Mucosa of descending colon (tissue), 3 donors: ENCODE measurements at regions of chr22 and their contacts with region 1.

Region 1: DNA sequence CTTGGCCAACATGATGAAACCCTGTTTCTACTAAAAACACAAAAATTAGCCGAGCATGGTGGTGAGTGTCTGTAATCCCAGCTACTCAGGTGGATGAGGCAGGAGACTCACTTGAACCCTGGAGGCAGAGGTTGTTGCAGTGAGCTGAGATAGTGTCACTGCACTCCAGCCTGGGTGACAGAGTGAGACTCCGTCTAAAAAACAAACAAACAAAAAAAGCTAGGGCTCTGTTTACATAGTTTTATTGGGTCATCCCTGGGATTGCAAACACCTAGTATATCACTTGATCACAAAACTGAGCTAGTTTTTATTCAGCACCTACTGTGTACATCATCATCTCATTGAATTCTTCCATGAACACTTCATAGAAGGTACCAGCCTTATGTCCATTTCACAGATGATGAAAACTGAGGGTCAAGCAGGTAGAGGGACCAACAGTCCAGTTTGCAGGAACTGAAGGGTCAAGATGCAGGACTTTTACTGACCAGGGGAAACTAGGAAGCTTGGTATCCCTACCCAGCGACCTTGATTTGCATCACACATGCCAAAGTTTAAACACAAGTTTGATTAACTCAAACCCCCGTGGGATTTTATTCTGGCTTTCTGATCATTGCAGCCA is 9.2 kb upstream of the MRTFA start:
- DNase-seq: no peak
- ATAC-seq: no peak
- H3K4me3 ChIP-seq: no peak overlapping the region
- H3K4me1 ChIP-seq: peaks cover 18% of the 10 kb centered on the region
- CTCF ChIP-seq: no peak

Region 2: DNA sequence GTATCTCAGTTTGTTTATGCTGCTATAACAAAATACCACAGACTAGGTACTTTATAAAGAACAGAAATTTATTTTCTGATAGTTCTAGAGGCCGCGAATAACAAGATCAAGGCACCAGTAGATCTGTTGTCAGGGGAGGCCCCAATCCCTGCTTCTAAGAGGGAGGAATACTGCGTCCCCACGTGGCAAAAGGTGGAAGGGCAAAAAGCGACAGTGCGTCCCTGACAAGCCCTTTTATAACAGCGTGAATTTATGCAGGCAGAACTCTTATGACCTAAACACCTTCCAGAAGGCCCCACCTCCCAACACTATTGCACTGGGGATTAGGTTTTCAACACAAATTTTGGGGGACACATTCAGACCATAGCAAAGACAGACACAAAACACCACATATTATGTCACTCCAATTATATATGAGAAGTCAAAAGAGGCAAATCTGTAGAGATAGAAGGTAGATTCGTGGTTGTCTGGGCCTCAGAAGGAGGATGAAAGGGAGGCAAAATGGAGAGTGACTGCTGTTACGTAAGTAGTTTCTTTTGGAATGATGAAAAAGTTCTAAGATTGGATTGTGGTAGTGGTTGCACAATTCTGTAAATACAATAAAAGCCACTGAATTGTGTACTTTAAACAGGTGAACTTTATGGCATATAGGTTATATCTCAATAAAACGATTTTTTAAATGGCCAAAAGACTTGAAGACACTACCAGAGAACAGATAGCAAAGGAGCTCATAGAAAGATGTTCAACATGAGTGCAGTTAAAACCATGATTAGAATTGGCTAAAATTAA is 498.1 kb before region 1 on chr22:
- intact Hi-C with region 1: no loop called
- DNase-seq: no peak
- ATAC-seq: peak; percentile 83
- H3K4me3 ChIP-seq: no peak overlapping the region
- H3K4me1 ChIP-seq: peaks cover 2% of the 10 kb centered on the region
- CTCF ChIP-seq: no peak

Region 3: GRCh38 chr22:40436505-40437451 is 208.9 kb before region 1 on chr22:
- intact Hi-C with region 1: loop called (anchors 2 to 5 kb)
- DNase-seq: no peak
- ATAC-seq: peak; percentile 75
- H3K4me3 ChIP-seq: no peak overlapping the region
- H3K4me1 ChIP-seq: peaks cover 13% of the 10 kb centered on the region
- CTCF ChIP-seq: no peak